GM13977 (cell line): ENCODE measurements at regions of chr11 and their contacts with region 1.

Region 1: GRCh38 chr11:68257475-68258362 is 14.1 kb downstream of the C11orf24 start:
- DNase-seq: peak; percentile 85
- CTCF ChIP-seq: peak; percentile 83

Region 2: DNA sequence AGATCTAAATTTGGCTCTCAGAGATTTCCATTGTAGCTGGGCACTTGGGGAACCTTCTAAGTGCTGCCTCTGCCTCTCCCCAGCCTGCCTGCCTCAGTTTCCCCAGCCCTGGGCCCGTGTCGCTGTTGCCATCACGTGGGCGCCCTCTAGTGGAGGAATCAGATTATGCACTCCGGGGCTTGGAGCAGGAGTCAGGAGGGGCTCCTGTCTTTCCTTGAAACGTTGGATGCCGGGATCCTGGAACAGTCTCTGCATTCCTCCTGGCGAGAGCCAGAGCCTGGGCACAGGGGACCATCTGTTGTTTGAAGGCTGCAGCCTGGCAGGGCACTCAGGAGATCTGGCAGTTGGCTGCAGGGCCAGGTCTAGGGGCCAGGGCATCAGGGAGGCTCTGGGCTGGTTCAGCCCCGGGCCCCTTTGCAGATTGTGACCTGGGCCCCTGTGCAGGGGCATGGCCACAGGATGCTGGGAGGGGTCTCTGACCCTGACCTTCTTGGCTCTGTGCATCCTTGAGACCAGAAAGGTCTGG is 126.3 kb after region 1 on chr11:
- in situ Hi-C with region 1: loop called (anchors 10 kb)
- DNase-seq: peak; percentile 83
- CTCF ChIP-seq: peak; percentile 96